CD8-positive, alpha-beta T cell (primary cell): ENCODE measurements at regions of chr9 and their contacts with region 1.

Region 1: GRCh38 chr9:121074635-121075385 is at the start of gene CNTRL:
- DNase-seq: peak; percentile 62 to 91 (median 85)
- ATAC-seq: peak; percentile 83
- H3K4me3 ChIP-seq: peak within 1 kb of the TSS; percentile 78 to 80
- H3K4me3 Mint-ChIP-seq: peak within 1 kb of the TSS; percentile 98
- H3K27ac ChIP-seq: peak within 1 kb of the TSS; percentile 77 to 80
- H3K27ac Mint-ChIP-seq: peak within 1 kb of the TSS; percentile 95
- H3K4me1 ChIP-seq: peaks cover 19% of the 10 kb centered on the region
- H3K4me1 Mint-ChIP-seq: peaks cover 43% of the 10 kb centered on the region
- H3K27me3 ChIP-seq: no peaks in the 10 kb centered on the region
- H3K27me3 Mint-ChIP-seq: no peaks in the 10 kb centered on the region
- CTCF ChIP-seq: no peak
- total RNA-seq, gene CNTRL: 29.8 to 30.8 TPM

Region 2: GRCh38 chr9:120579750-120580590 is 494.8 kb before region 1 on chr9 and contains the start of gene CDK5RAP2:
- CTCF ChIA-PET with region 1: no interaction called
- POLR2A ChIA-PET with region 1: no interaction called
- intact Hi-C with region 1: loop called in 1 of 2 experiments (anchors 1 kb)
- DNase-seq: peak; percentile 83 to 98 (median 91)
- ATAC-seq: peak; percentile 98
- H3K4me3 ChIP-seq: peak within 1 kb of the TSS; percentile 63 to 86
- H3K4me3 Mint-ChIP-seq: peak within 1 kb of the TSS; percentile 92
- H3K27ac ChIP-seq: peak within 1 kb of the TSS; percentile 68 to 77
- H3K27ac Mint-ChIP-seq: peak within 1 kb of the TSS; percentile 95
- H3K4me1 ChIP-seq: peaks cover 25% of the 10 kb centered on the region
- H3K4me1 Mint-ChIP-seq: peaks cover 56% of the 10 kb centered on the region
- H3K27me3 ChIP-seq: no peaks in the 10 kb centered on the region
- H3K27me3 Mint-ChIP-seq: no peaks in the 10 kb centered on the region
- CTCF ChIP-seq: no peak
- total RNA-seq, gene CDK5RAP2: 52.1 to 55.2 TPM

Region 3: DNA sequence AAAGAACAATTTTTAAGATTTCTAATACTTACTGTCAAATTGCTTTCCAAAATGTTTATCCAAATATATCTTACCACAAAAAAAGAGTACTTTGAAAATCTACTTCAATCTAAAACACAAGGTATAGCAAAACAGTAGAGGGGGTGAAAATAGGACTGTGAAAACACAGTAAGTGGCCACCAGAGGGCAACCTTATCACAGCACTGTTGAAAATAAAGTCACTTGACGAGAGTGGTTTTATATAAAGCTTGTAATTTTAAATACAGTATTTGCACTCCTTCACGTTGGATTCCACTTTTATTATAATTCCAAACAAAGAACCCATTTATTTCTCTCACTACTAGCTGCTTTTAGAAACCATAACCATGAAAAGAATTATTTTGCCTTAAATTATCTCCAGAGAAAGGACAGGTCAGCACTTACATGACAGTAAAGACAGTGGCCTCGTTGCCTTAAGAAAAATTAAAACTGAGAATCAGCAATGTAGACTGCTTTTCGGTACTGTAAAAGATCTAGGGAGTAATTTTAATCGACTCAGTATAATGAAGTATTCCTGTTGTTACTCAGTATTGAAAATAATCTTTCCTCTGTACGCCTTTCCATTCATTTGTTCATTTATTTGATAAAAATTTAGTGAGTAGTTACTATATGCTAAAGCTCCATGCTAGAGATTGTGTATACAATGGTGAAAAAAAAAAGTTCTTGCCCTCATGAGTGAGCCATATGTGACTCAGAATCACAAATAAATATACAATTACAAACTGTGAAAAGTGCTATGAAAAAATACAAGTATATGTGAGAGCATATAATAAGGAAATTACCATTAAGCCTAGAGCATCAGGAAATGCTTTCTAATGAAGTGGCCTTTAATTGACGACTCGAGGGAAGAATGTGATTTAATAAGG is 454.8 kb before region 1 on chr9:
- CTCF ChIA-PET with region 1: no interaction called
- POLR2A ChIA-PET with region 1: interaction called, 3 read pairs
- intact Hi-C with region 1: loop called in 1 of 2 experiments (anchors 5 kb)
- DNase-seq: peak; percentile 8 to 76 (median 59)
- ATAC-seq: peak; percentile 65
- H3K4me3 ChIP-seq: no peak overlapping the region
- H3K4me3 Mint-ChIP-seq: no peak overlapping the region
- H3K27ac ChIP-seq: no peak overlapping the region
- H3K27ac Mint-ChIP-seq: no peak overlapping the region
- H3K4me1 ChIP-seq: no peaks in the 10 kb centered on the region
- H3K4me1 Mint-ChIP-seq: no peaks in the 10 kb centered on the region
- H3K27me3 ChIP-seq: no peaks in the 10 kb centered on the region
- H3K27me3 Mint-ChIP-seq: no peaks in the 10 kb centered on the region
- CTCF ChIP-seq: peak; percentile 98

Region 4: DNA sequence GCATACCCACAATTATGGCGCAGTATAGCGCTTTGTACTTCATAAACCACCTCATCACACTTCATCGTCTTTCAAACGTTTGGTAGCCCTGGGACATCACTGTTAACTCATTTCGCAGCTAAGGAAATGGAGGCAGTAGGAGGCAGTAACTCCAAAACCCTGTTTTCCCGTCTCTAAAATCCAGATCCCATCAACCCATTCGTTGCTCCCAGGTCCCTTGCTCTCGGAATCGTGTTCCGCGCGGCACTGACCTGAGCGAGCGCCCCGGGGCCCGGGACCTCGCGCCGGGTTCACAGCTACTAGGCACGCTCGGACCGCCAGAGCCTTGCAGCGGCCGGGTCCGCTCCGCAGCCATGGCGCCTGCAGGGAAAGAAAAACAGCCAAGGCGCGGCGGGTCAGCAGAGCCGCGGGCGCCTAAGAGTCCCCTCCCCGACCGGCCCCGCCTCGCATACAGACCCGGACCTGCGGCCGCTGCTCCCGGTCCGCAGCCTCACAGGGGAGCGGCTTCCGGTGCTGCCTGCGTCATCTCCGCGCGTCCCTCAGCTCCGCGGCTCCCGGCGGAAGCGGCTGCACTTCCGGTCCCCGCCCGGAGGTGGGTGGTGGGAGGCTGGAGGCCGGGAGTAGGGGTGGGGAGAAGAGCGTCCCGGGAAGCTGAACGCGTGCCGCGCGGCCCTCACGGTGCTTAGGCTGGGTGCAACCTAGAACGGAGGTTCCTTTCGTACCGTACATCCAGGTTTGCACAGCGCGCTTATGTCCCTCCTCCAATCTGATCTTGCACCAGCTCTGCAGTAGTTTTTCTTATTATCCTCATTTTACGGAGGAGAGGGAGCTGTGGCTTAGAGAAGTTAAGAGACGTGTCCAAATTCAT is 281.7 kb before region 1 on chr9 and contains the start of gene FBXW2:
- CTCF ChIA-PET with region 1: no interaction called
- POLR2A ChIA-PET with region 1: interaction called, 5 read pairs
- intact Hi-C with region 1: loop called (anchors 1 kb)
- DNase-seq: peak; percentile 50 to 93 (median 84)
- ATAC-seq: peak; percentile 81
- H3K4me3 ChIP-seq: peak within 1 kb of the TSS; percentile 60 to 88
- H3K4me3 Mint-ChIP-seq: peak within 1 kb of the TSS; percentile 85
- H3K27ac ChIP-seq: peak within 1 kb of the TSS; percentile 88 to 90
- H3K27ac Mint-ChIP-seq: peak within 1 kb of the TSS; percentile 87
- H3K4me1 ChIP-seq: peaks cover 26% of the 10 kb centered on the region
- H3K4me1 Mint-ChIP-seq: peaks cover 60% of the 10 kb centered on the region
- H3K27me3 ChIP-seq: no peaks in the 10 kb centered on the region
- H3K27me3 Mint-ChIP-seq: no peaks in the 10 kb centered on the region
- CTCF ChIP-seq: no peak
- total RNA-seq, gene FBXW2: 51.9 to 54.7 TPM

Region 5: DNA sequence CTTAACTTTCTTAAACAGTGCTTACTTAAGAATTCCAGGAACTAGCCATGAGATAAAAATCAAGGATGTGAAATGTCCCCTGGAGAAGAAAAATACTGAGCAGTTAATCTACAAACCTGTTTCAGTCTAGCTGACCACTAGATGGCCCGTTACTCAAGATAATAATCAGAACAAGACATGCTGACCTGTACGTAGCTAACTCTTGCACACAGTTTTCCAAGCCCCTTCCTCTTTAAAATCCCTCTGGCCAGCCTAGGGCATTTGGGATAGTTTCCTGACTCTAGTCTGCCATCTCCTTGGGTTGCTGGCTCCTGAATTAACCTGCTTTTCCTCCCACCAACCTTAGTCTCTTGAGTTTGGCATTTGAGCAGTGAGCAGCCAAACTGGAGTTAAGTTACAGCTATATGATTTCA is 89.0 kb before region 1 on chr9:
- CTCF ChIA-PET with region 1: interaction called, 14 read pairs
- POLR2A ChIA-PET with region 1: no interaction called
- intact Hi-C with region 1: loop called (anchors 1 kb)
- DNase-seq: peak in 1 of 9 experiments; percentile 12
- ATAC-seq: no peak
- H3K4me3 ChIP-seq: no peak overlapping the region
- H3K4me3 Mint-ChIP-seq: no peak overlapping the region
- H3K27ac ChIP-seq: no peak overlapping the region
- H3K27ac Mint-ChIP-seq: no peak overlapping the region
- H3K4me1 ChIP-seq: no peaks in the 10 kb centered on the region
- H3K4me1 Mint-ChIP-seq: peaks cover 5% of the 10 kb centered on the region
- H3K27me3 ChIP-seq: no peaks in the 10 kb centered on the region
- H3K27me3 Mint-ChIP-seq: no peaks in the 10 kb centered on the region
- CTCF ChIP-seq: no peak

Region 6: DNA sequence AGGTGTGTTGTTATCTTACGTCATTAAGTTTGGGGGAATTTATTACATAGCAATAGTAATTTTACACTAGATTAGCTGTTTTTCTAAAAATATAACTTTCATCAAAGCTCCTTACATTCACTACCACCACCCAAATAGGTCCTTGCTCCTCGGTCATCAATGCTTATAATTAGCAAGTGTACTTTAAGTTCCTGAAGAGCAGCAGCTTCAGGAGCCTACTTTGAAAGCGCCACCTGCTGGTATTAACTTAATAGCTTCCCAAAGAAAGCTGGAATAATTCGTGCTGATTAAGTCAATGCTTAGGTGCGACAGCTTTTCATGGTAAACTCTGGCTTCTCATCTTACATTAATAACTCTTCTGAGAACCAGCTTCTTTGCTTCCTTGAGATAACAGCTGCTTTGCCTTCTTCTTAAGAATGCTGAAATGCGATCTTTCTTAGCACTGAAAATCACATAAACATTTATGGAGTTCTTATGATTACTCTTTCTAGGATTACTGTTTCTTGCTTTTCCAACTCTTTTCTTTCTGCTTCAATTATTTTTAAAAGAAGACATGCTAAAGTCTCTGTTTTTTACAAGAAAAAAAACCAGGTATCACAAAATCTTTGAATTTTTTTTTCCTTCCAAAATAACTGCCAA is 14.7 kb before region 1 on chr9:
- CTCF ChIA-PET with region 1: interaction called, 30 read pairs
- POLR2A ChIA-PET with region 1: interaction called, 4 read pairs
- intact Hi-C with region 1: no loop called
- DNase-seq: peak in 5 of 9 experiments; percentile 5 to 74 (median 37)
- ATAC-seq: peak; percentile 26
- H3K4me3 ChIP-seq: no peak overlapping the region
- H3K4me3 Mint-ChIP-seq: no peak overlapping the region
- H3K27ac ChIP-seq: no peak overlapping the region
- H3K27ac Mint-ChIP-seq: no peak overlapping the region
- H3K4me1 ChIP-seq: no peaks in the 10 kb centered on the region
- H3K4me1 Mint-ChIP-seq: peaks cover 13% of the 10 kb centered on the region
- H3K27me3 ChIP-seq: no peaks in the 10 kb centered on the region
- H3K27me3 Mint-ChIP-seq: no peaks in the 10 kb centered on the region
- CTCF ChIP-seq: peak; percentile 73

Region 7: DNA sequence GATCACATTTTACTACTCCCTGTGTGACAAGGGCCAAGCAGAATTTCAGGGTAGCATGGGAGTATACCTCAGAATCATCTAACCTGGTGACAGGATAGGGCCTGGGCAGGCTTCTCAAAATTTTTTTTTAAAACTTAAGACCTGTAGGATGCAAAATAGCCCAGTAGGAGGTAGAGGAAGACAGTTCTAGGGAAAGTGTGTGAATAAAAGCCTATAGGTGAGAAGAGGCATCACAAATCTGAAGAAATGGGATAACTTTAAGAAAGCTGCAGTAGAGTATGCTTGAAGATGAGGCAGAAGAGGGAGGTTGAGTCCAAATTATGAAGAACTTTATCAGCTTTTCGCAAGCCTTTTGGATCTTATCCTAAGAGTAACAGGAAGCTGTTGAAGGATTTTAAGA is 32.2 kb after region 1 on chr9:
- CTCF ChIA-PET with region 1: no interaction called
- POLR2A ChIA-PET with region 1: no interaction called
- intact Hi-C with region 1: no loop called
- DNase-seq: peak in 2 of 9 experiments; percentile 39 to 59
- ATAC-seq: peak; percentile 96
- H3K4me3 ChIP-seq: no peak overlapping the region
- H3K4me3 Mint-ChIP-seq: no peak overlapping the region
- H3K27ac ChIP-seq: no peak overlapping the region
- H3K27ac Mint-ChIP-seq: no peak overlapping the region
- H3K4me1 ChIP-seq: peaks cover 4% of the 10 kb centered on the region
- H3K4me1 Mint-ChIP-seq: peaks cover 22% of the 10 kb centered on the region
- H3K27me3 ChIP-seq: no peaks in the 10 kb centered on the region
- H3K27me3 Mint-ChIP-seq: no peaks in the 10 kb centered on the region
- CTCF ChIP-seq: peak; percentile 61

Region 8: GRCh38 chr9:122904823-122905710 is 1830.3 kb after region 1 on chr9 and contains the start of gene RC3H2:
- CTCF ChIA-PET with region 1: no interaction called
- POLR2A ChIA-PET with region 1: no interaction called
- intact Hi-C with region 1: no loop called
- DNase-seq: peak; percentile 92 to 100 (median 97)
- ATAC-seq: peak; percentile 91
- H3K4me3 ChIP-seq: peak within 1 kb of the TSS; percentile 66 to 92
- H3K4me3 Mint-ChIP-seq: peak within 1 kb of the TSS; percentile 94
- H3K27ac ChIP-seq: peak within 1 kb of the TSS; percentile 67 to 94
- H3K27ac Mint-ChIP-seq: peak within 1 kb of the TSS; percentile 98
- H3K4me1 ChIP-seq: peaks cover 32% of the 10 kb centered on the region
- H3K4me1 Mint-ChIP-seq: peaks cover 26% of the 10 kb centered on the region
- H3K27me3 ChIP-seq: no peaks in the 10 kb centered on the region
- H3K27me3 Mint-ChIP-seq: no peaks in the 10 kb centered on the region
- CTCF ChIP-seq: no peak
- total RNA-seq, gene RC3H2: 77.6 to 79.5 TPM